Activated CD4-positive, alpha-beta memory T cell treated with anti-CD3 and anti-CD28 coated beads, Interleukin-2, amount 10 ng/mL, durations not matched to agents 7 days and 5 days (primary cell): ENCODE measurements at regions of chr13 and their contacts with region 1.

Region 1: GRCh38 chr13:50236898-50237318 is 221.7 kb downstream of the KCNRG start:
- DNase-seq: peak; percentile 39
- H3K4me3 Mint-ChIP-seq: peak overlapping the region; percentile 5
- H3K27ac Mint-ChIP-seq: peak overlapping the region; percentile 53
- H3K4me1 Mint-ChIP-seq: peaks cover 26% of the 10 kb centered on the region
- H3K27me3 Mint-ChIP-seq: peaks cover 71% of the 10 kb centered on the region

Region 2: GRCh38 chr13:50015258-50015657 is 221.7 kb before region 1 on chr13 and contains the start of gene KCNRG:
- CTCF ChIA-PET with region 1: no interaction called
- POLR2A ChIA-PET with region 1: no interaction called
- DNase-seq: no peak
- H3K4me3 Mint-ChIP-seq: no peak within 1 kb of the TSS
- H3K27ac Mint-ChIP-seq: no peak within 1 kb of the TSS
- H3K4me1 Mint-ChIP-seq: peaks cover 3% of the 10 kb centered on the region
- H3K27me3 Mint-ChIP-seq: no peaks in the 10 kb centered on the region
- total RNA-seq, gene KCNRG: 0.30 to 0.65 TPM

Region 3: DNA sequence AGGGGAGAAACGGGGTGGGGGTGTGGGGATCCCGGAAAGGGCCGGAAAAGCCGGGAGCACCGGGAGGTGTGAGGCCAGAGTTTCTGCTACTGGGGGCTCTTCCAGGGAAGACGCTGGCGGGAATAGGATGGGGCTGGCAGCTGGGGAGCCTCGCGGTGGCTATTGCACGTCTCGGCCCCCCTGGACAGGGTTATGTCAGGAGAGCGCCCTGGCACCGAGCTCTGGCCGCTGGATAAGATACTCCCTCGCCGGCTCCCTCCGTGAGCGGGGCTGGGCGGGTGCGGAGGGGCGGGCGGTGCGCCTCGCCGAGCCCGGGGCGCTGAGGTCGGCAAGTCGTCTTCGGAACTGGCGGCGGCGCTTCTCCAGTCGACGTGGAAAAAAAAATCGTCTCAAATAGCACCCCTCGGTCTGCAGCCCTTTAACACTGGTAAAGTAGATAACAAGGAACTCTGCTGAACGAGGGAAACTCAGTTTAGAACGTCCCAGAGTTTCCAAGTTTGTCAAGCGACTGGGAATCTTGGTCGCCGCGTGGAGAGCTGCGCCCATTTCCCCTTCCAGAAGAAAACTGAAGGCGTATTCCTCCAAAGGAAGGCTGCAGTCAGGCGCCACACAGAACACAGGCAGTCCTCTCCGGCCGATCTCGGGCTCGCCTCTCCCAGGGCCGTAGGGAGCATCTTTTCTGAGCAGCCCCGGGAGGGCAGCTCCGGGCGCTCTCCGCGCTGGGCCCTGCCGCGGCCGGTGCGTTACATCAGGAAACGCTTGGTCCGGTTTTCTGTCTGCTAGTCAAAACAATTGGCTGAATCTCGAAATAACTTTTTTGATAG is 106.6 kb before region 1 on chr13:
- CTCF ChIA-PET with region 1: interaction called, 3 read pairs
- POLR2A ChIA-PET with region 1: interaction called, 44 read pairs
- DNase-seq: peak; percentile 31
- H3K4me3 Mint-ChIP-seq: peak overlapping the region; percentile 84
- H3K27ac Mint-ChIP-seq: peak overlapping the region; percentile 31
- H3K4me1 Mint-ChIP-seq: peaks cover 63% of the 10 kb centered on the region
- H3K27me3 Mint-ChIP-seq: peaks cover 72% of the 10 kb centered on the region

Region 4: DNA sequence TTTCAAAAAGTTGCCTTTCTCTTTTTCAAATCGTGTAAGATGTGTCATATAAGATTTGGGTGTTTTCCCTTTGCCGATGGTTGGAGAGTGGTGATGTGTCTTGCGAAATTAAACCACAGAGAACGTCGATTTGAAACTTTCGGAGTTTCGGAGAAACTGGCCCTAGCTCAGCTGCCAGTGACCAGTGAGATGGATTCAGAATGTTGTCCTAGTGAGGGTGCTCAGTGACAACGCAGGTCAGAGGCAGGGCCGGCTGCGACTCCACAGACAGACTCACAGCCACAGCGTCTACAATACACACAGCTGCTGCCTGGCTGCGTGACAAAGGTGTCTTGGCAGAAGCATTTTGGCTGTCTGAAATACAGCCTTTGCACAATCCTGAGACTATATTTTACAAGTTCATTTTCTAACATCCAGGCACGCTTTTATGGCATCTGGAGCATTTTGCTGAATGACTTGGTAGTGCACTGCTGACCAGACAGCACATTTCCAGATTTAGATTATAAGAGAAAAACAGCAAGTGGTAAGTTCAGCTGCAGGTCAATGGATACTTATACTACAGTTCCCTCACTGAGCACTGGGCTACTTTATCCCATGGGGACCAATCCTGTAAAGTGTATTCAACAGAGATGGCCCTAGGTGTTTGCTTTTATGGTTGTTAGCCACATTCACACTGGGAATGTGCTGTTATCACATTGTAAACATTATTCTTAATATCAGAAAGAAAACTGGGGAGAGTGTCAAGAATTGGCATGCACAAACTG is 14.2 kb before region 1 on chr13:
- CTCF ChIA-PET with region 1: interaction called, 5 read pairs
- POLR2A ChIA-PET with region 1: interaction called, 15 read pairs
- DNase-seq: peak; percentile 19
- H3K4me3 Mint-ChIP-seq: peak overlapping the region; percentile 25
- H3K27ac Mint-ChIP-seq: no peak overlapping the region
- H3K4me1 Mint-ChIP-seq: peaks cover 54% of the 10 kb centered on the region
- H3K27me3 Mint-ChIP-seq: peaks cover 73% of the 10 kb centered on the region